ENCODE measurements at regions of chr1 and their contacts with region 1.

Region 1: DNA sequence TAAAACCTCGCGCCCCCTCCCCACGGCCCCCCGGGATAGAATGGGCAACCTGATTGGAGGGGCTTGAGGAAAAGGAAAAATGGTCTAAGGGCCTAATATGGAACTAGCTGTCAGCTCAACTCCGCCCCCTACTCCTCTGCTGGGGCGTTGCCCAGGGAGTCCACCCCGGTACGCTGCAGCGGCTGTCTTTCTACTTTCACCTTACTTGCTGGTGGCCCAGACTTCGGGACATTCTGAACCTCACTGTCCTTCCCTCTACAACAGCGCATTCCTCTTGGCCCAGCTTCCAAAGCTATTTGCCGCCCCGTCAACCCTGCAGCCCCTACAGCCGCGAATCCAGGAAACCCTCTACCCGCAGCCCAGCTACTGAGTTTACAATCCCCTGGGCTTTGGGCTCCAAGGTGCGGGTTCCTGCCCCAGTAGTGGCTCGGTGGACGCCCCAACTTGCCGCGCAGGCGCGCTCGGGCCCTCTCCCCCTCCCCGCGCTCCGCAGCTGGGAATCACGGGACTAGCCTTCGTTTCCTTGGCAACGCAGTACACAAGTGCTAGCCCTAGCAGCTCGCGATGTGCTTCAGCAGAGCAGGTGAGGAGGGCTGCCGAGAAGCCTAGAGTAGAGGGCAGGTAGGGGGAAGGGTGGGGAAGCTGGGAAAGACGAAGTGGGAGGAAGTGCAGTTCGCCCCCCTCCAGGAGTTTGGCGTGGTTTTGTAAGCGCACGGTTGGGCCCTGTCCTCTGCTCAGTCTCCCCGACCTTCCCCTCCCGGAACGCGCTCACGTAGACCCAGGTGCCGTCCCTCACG is 55.6 kb downstream of the CHIA start:
- DNase-seq: peak; percentile 84
- ATAC-seq: peak; percentile 94
- H3K4me3 ChIP-seq: peak overlapping the region; percentile 68 to 80 (median 69); a peak in 5 of 6 replicates
- H3K27ac ChIP-seq: peak overlapping the region; percentile 59
- H3K4me1 ChIP-seq: peaks cover 24% of the 10 kb centered on the region
- H3K27me3 ChIP-seq: no peaks in the 10 kb centered on the region; a peak in 1 of 5 replicates
- CTCF ChIP-seq: peak; percentile 57
- EP300 ChIP-seq: no peak
- POLR2A ChIP-seq: peak; percentile 48 to 49; a peak in 3 of 4 replicates
- RAD21 ChIP-seq: no peak

Region 2: GRCh38 chr1:111222308-111223125 is 123.8 kb before region 1 on chr1:
- CTCF ChIA-PET with region 1: no interaction called
- POLR2A ChIA-PET with region 1: no interaction called
- in situ Hi-C with region 1: no loop called
- intact Hi-C with region 1: loop called (anchors 5 kb)
- DNase-seq: peak; percentile 62
- ATAC-seq: peak; percentile 97
- H3K4me3 ChIP-seq: peak overlapping the region in 2 of 3 experiments; percentile 8 to 39; a peak in 3 of 6 replicates
- H3K27ac ChIP-seq: no peak overlapping the region
- H3K4me1 ChIP-seq: peaks cover 52% of the 10 kb centered on the region
- H3K27me3 ChIP-seq: no peaks in the 10 kb centered on the region; a peak in 1 of 5 replicates
- CTCF ChIP-seq: peak; percentile 97
- EP300 ChIP-seq: no peak
- POLR2A ChIP-seq: no peak
- RAD21 ChIP-seq: peak; percentile 97